ENCODE measurements at regions of chr11 and their contacts with region 1.

Region 1: GRCh38 chr11:47642099-47642855 is at the start of gene MTCH2:
- DNase-seq: peak; percentile 96
- H3K4me3 ChIP-seq: peak within 1 kb of the TSS; percentile 81 to 99 (median 93)
- H3K27ac ChIP-seq: peak within 1 kb of the TSS; percentile 89
- H3K4me1 ChIP-seq: peaks cover 11% of the 10 kb centered on the region
- H3K27me3 ChIP-seq: no peaks in the 10 kb centered on the region
- CTCF ChIP-seq: peak in 1 of 2 donors; percentile 35
- total RNA-seq, gene MTCH2: 69.3 to 123 TPM

Region 2: GRCh38 chr11:47225552-47226400 is 416.5 kb before region 1 on chr11:
- CTCF ChIA-PET with region 1: no interaction called
- dilution Hi-C with region 1: no loop called
- in situ Hi-C with region 1: no loop called
- intact Hi-C with region 1: no loop called
- DNase-seq: no peak
- H3K4me3 ChIP-seq: no peak overlapping the region
- H3K27ac ChIP-seq: no peak overlapping the region
- H3K4me1 ChIP-seq: no peaks in the 10 kb centered on the region
- H3K27me3 ChIP-seq: no peaks in the 10 kb centered on the region
- CTCF ChIP-seq: no peak

Region 3: GRCh38 chr11:47667135-47667534 is 24.9 kb after region 1 on chr11:
- CTCF ChIA-PET with region 1: no interaction called
- dilution Hi-C with region 1: no loop called
- in situ Hi-C with region 1: no loop called
- intact Hi-C with region 1: loop called (anchors 2 kb)
- DNase-seq: no peak
- H3K4me3 ChIP-seq: no peak overlapping the region
- H3K27ac ChIP-seq: no peak overlapping the region
- H3K4me1 ChIP-seq: no peaks in the 10 kb centered on the region
- H3K27me3 ChIP-seq: no peaks in the 10 kb centered on the region
- CTCF ChIP-seq: no peak

Region 4: DNA sequence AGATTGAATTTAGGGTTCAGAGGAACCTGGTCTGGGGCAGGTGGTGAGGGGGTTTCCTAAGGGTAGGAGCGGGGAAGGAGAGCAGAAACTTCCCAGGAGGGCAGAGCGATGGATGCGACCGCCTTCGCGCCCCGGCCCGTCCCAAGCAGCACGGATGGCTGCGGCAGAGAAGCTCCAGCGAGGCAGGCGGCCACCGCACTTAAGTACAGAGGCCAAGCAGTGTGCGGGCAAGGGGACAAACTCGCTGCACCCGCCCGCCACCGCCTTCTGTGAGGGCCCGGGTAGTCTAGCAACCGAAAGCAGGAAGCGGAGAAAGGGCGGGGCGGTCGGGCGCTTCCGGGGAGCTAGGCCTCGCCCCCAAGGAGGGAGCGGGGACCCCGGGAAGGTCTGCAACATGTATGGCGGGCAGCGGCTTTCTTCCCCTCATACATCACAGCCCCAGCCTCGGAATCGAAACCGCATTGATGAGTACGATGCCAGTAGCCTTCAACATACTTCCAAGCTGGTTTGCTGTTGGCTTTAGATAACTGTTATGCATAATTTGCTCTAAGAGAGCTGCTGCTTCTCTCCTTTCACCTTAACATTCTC is 72.9 kb after region 1 on chr11 and contains the start of gene AGBL2:
- CTCF ChIA-PET with region 1: no interaction called
- dilution Hi-C with region 1: no loop called
- in situ Hi-C with region 1: loop called in 1 of 2 experiments (anchors 10 kb)
- intact Hi-C with region 1: loop called (anchors 1 kb)
- DNase-seq: peak; percentile 56
- H3K4me3 ChIP-seq: peak within 1 kb of the TSS; percentile 51 to 72 (median 62)
- H3K27ac ChIP-seq: peak within 1 kb of the TSS; percentile 71
- H3K4me1 ChIP-seq: peaks cover 12% of the 10 kb centered on the region
- H3K27me3 ChIP-seq: no peaks in the 10 kb centered on the region
- CTCF ChIP-seq: no peak
- total RNA-seq, gene AGBL2: 1.7 to 2.3 TPM

Region 5: DNA sequence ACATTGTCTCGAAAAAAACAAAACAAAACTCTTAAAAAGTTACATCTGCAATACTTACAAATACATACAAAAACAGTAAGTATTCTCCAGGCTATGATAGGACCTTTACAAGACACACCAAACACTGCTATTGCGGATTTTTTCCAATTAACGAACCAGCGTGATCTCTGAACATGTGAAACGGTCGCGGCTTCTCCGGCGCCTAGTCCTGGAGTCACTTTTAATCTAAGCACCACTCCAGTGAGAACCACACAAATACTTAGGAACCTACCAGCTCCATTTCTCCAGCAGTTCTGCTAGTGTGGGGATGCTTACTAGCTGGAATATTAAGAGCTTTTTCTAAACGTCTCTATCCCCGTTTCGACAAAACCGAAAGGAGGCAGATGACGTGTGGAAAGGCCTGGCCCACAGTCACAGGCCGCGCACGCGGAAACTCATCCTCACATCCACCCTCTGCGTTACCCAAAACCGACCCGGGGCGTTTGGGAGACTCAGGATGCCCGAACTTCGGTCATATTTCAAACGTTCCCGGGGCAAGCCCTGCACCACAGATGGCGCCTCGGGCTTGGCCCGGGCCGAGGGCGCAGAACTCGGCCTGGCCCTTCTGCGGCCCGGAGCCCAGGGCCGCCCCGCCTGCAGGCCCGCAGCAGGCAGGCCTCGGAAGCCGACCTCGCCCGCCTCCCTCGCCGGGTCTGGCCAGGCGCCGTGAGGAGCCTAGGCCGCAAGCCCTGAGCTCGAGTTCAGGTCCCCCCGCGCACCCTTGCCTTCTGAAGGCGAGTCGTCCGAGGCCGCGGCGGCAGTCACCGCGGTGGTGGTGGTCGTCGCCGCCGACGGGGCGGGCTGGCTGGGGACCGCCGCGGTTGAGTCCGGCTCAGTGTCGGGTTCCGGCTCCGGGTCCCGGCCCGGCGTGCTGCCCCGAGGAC is 124.3 kb after region 1 on chr11:
- CTCF ChIA-PET with region 1: no interaction called
- dilution Hi-C with region 1: no loop called
- in situ Hi-C with region 1: no loop called
- intact Hi-C with region 1: loop called (anchors 2 kb)
- DNase-seq: peak; percentile 70
- H3K4me3 ChIP-seq: peak overlapping the region; percentile 69 to 95 (median 90)
- H3K27ac ChIP-seq: peak overlapping the region; percentile 99
- H3K4me1 ChIP-seq: peaks cover 16% of the 10 kb centered on the region
- H3K27me3 ChIP-seq: no peaks in the 10 kb centered on the region
- CTCF ChIP-seq: no peak

Region 6: DNA sequence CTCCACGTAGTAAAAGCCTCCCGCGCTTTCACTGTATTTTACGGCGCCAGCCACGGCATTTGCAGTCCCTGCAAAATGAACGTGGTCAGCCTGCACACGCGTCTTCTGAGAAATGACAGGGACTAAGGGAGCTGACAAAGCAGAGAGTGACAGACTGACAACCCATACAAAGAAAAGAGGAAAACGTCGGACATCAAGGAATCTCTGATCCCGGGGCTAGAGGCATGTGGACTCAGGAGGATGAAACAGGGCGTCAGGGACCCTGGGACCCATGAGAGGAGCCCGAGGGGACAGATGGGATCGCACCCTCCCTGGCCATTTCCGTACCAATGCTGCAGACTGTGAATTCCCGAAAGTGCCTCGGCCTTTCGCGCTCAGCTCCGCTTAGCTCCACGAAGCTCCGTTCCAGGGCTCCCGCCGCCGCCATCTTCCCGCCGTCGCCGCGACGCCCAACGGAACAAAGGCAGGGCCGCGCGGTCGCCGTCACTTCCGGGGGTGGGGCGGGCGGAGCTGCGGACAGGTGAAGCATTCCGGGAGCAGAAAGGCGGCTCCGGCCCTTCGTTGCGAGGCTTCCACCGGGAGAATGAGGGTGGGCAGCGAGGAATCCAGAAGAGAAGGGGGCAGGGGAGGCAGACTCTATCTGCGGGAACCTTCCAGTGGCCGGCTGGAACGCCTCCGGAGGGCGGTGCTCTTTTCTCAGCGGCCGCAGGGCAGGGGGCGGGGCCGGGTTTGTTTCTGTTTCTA is 205.8 kb after region 1 on chr11 and contains the start of gene NUP160:
- CTCF ChIA-PET with region 1: no interaction called
- dilution Hi-C with region 1: no loop called
- in situ Hi-C with region 1: no loop called
- intact Hi-C with region 1: loop called (anchors 10 kb)
- DNase-seq: peak; percentile 69
- H3K4me3 ChIP-seq: peak within 1 kb of the TSS; percentile 81 to 97 (median 93)
- H3K27ac ChIP-seq: peak within 1 kb of the TSS; percentile 86
- H3K4me1 ChIP-seq: peaks cover 14% of the 10 kb centered on the region
- H3K27me3 ChIP-seq: no peaks in the 10 kb centered on the region
- CTCF ChIP-seq: no peak
- total RNA-seq, gene NUP160: 20.8 to 29.3 TPM

Measured in mammary epithelial cell (primary cell).